ENCODE measurements at regions of chr3 and their contacts with region 1.

Region 1: GRCh38 chr3:44861412-44862220 is at the start of gene TMEM42:
- DNase-seq: peak; percentile 95
- H3K4me3 ChIP-seq: peak within 1 kb of the TSS; percentile 66 to 88 (median 72)
- H3K27ac ChIP-seq: peak within 1 kb of the TSS; percentile 71
- H3K4me1 ChIP-seq: peaks cover 7% of the 10 kb centered on the region
- H3K27me3 ChIP-seq: no peaks in the 10 kb centered on the region
- CTCF ChIP-seq: peak in 1 of 2 donors; percentile 40
- POLR2A ChIP-seq: peak; percentile 86
- total RNA-seq, gene TMEM42: 10.6 and 13.6 TPM in 2 replicates

Region 2: GRCh38 chr3:42961633-42962032 is 1900.0 kb before region 1 on chr3:
- CTCF ChIA-PET with region 1: no interaction called
- POLR2A ChIA-PET with region 1: no interaction called
- dilution Hi-C with region 1: no loop called
- intact Hi-C with region 1: no loop called
- DNase-seq: peak; percentile 55
- H3K4me3 ChIP-seq: no peak overlapping the region
- H3K27ac ChIP-seq: no peak overlapping the region
- H3K4me1 ChIP-seq: no peaks in the 10 kb centered on the region
- H3K27me3 ChIP-seq: peaks cover 3 to 5% of the 10 kb centered on the region in 2 experiments
- CTCF ChIP-seq: peak; percentile 41 to 42
- POLR2A ChIP-seq: no peak

Region 3: GRCh38 chr3:44179246-44179645 is 682.4 kb before region 1 on chr3:
- CTCF ChIA-PET with region 1: no interaction called
- POLR2A ChIA-PET with region 1: no interaction called
- dilution Hi-C with region 1: no loop called
- intact Hi-C with region 1: no loop called
- DNase-seq: no peak
- H3K4me3 ChIP-seq: no peak overlapping the region
- H3K27ac ChIP-seq: no peak overlapping the region
- H3K4me1 ChIP-seq: no peaks in the 10 kb centered on the region
- H3K27me3 ChIP-seq: no peaks in the 10 kb centered on the region
- CTCF ChIP-seq: no peak
- POLR2A ChIP-seq: no peak

Region 4: DNA sequence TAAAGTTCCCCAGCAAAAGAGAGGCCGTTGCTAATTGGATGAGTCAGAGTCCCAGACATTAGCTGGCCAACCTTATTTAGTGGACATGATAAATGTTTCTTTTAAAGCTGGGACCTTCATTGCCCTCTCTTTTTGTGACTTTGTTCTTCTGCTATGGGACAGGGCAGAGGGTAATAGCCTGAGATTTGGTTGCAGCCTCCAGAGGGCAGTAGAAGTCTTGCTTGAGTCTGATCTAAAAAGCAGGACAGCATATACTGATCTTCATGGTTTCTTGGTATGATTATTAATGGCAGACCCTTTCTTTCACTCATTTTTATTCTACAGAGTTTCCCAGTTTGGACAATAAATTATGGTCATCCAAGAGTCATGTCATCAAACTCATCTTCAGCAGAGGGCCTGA is 331.7 kb before region 1 on chr3:
- CTCF ChIA-PET with region 1: no interaction called
- POLR2A ChIA-PET with region 1: no interaction called
- dilution Hi-C with region 1: no loop called
- intact Hi-C with region 1: loop called (anchors 1 kb)
- DNase-seq: peak; percentile 8
- H3K4me3 ChIP-seq: no peak overlapping the region
- H3K27ac ChIP-seq: no peak overlapping the region
- H3K4me1 ChIP-seq: no peaks in the 10 kb centered on the region
- H3K27me3 ChIP-seq: no peaks in the 10 kb centered on the region
- CTCF ChIP-seq: peak; percentile 21 to 23
- POLR2A ChIP-seq: no peak

Region 5: DNA sequence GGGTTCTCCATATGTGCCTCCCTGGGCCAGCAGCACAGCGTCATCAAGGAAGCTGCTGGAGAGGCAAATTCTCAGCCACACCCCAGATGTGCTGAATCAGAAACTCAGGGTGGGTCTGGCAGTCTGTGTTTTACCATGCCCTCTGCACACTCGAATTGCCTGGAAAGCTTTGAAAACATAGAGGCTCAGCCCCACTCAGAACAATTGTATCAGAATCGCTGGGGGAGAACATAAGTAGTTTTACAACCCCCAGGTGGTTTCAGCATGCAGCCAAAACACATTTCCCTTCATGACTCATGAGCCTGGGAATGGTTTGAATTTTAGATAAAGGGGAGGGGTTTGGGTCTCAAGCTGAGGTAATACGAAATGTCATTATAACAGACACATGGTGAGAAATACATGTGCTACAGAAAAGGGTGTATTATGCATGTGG is 22.4 kb after region 1 on chr3:
- CTCF ChIA-PET with region 1: interaction called, 8 read pairs
- POLR2A ChIA-PET with region 1: interaction called, 3 read pairs
- dilution Hi-C with region 1: no loop called
- intact Hi-C with region 1: loop called (anchors 1 kb)
- DNase-seq: peak; percentile 90
- H3K4me3 ChIP-seq: no peak overlapping the region
- H3K27ac ChIP-seq: peak overlapping the region; percentile 91
- H3K4me1 ChIP-seq: peaks cover 38% of the 10 kb centered on the region
- H3K27me3 ChIP-seq: no peaks in the 10 kb centered on the region
- CTCF ChIP-seq: no peak
- POLR2A ChIP-seq: no peak

Measured in endothelial cell of umbilical vein (primary cell).